ENCODE measurements at regions of chr6 and their contacts with region 1.

Region 1: GRCh38 chr6:154030646-154031045 is 8.4 kb upstream of the OPRM1 start:
- DNase-seq: no peak
- ATAC-seq: no peak
- H3K4me3 ChIP-seq: no peak overlapping the region
- H3K27ac ChIP-seq: no peak overlapping the region
- H3K4me1 ChIP-seq: no peaks in the 10 kb centered on the region
- H3K27me3 ChIP-seq: no peaks in the 10 kb centered on the region

Region 2: GRCh38 chr6:154343473-154344308 is 313.0 kb after region 1 on chr6:
- intact Hi-C with region 1: loop called in 1 of 2 experiments (anchors 10 kb)
- DNase-seq: no peak
- ATAC-seq: no peak
- H3K4me3 ChIP-seq: no peak overlapping the region
- H3K27ac ChIP-seq: no peak overlapping the region
- H3K4me1 ChIP-seq: no peaks in the 10 kb centered on the region
- H3K27me3 ChIP-seq: no peaks in the 10 kb centered on the region

Measured in aorta (tissue), 5 donors.